Activated CD4-positive, alpha-beta memory T cell treated with anti-CD3 and anti-CD28 coated beads, Interleukin-2, amount 10 ng/mL, durations not matched to agents 7 days and 5 days (primary cell): ENCODE measurements at regions of chr15 and their contacts with region 1.

Region 1: GRCh38 chr15:41557673-41558399 is 1.2 kb upstream of the TYRO3 start:
- DNase-seq: peak; percentile 77
- H3K4me3 Mint-ChIP-seq: peak overlapping the region; percentile 74
- H3K27ac Mint-ChIP-seq: peak overlapping the region; percentile 68
- H3K4me1 Mint-ChIP-seq: peaks cover 27% of the 10 kb centered on the region
- H3K27me3 Mint-ChIP-seq: peaks cover 38% of the 10 kb centered on the region

Region 2: GRCh38 chr15:41544650-41545015 is 13.2 kb before region 1 on chr15:
- CTCF ChIA-PET with region 1: interaction called, 16 read pairs
- POLR2A ChIA-PET with region 1: interaction called, 12 read pairs
- DNase-seq: no peak
- H3K4me3 Mint-ChIP-seq: peak overlapping the region; percentile 95
- H3K27ac Mint-ChIP-seq: no peak overlapping the region
- H3K4me1 Mint-ChIP-seq: peaks cover 16% of the 10 kb centered on the region
- H3K27me3 Mint-ChIP-seq: no peaks in the 10 kb centered on the region

Region 3: DNA sequence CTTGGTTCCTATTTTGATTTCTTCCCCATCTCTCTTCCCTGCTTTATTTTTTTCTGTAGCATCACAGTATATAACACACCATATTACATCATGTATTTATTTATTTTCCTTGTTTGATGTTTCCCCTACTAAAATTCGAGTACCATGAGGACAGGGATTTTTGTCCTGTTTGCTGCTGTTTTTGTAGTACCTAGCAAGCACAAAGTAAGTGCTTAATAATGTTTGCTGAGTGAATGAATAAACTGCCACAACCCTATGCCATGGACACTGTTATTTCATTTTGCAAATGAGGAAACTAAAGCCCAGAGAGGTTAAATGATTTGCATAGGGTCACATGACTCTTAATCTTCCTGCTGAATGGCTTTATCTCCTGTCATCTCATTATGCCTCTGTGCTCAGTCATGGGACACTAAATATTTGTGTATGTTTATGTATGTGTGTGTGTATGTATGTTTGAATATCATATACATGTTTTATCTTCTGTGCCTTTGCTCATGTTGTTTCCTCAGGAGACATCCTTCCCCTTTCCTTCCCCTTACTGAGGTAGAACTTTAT is 76.3 kb after region 1 on chr15:
- CTCF ChIA-PET with region 1: no interaction called
- POLR2A ChIA-PET with region 1: no interaction called
- DNase-seq: no peak
- H3K4me3 Mint-ChIP-seq: no peak overlapping the region
- H3K27ac Mint-ChIP-seq: no peak overlapping the region
- H3K4me1 Mint-ChIP-seq: peaks cover 5% of the 10 kb centered on the region
- H3K27me3 Mint-ChIP-seq: no peaks in the 10 kb centered on the region